ENCODE measurements at regions of chr3 and their contacts with region 1.

Region 1: GRCh38 chr3:179604321-179605078 is at the starts of genes MRPL47 and NDUFB5:
- DNase-seq: peak; percentile 96
- H3K4me3 Mint-ChIP-seq: peak within 1 kb of the TSS; percentile 99
- H3K27ac Mint-ChIP-seq: peak within 1 kb of the TSS; percentile 98
- H3K4me1 Mint-ChIP-seq: peaks cover 40% of the 10 kb centered on the region
- H3K27me3 Mint-ChIP-seq: no peaks in the 10 kb centered on the region
- total RNA-seq, gene MRPL47: 51.4 to 54.0 TPM
- total RNA-seq, gene NDUFB5: 133 to 147 TPM

Region 2: GRCh38 chr3:179551349-179552105 is 53.0 kb before region 1 on chr3:
- CTCF ChIA-PET with region 1: no interaction called
- POLR2A ChIA-PET with region 1: no interaction called
- intact Hi-C with region 1: no loop called
- DNase-seq: no peak
- H3K4me3 Mint-ChIP-seq: no peak overlapping the region
- H3K27ac Mint-ChIP-seq: no peak overlapping the region
- H3K4me1 Mint-ChIP-seq: no peaks in the 10 kb centered on the region
- H3K27me3 Mint-ChIP-seq: peaks cover 1% of the 10 kb centered on the region

Region 3: DNA sequence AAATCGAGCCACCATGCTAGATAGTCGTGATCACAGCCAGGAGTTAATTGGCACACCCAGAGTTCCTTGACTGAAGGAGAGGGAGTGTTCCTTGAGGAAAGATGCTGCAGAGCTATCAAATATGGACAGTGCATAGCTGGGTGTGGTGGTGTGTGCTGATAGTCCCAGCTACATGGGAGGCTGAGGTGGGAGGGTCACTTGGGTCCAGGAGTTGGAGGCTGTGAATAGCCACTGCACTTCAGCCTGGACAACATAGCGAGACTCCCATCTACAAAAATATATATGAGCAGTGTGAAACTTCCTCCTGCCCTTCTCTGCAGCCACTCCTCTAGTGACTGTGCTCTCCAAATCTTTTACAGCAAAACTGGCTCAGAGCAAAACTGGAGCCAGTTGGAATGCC is 38.4 kb after region 1 on chr3:
- CTCF ChIA-PET with region 1: no interaction called
- POLR2A ChIA-PET with region 1: interaction called, 7 read pairs
- intact Hi-C with region 1: loop called (anchors 1 kb)
- DNase-seq: no peak
- H3K4me3 Mint-ChIP-seq: no peak overlapping the region
- H3K27ac Mint-ChIP-seq: no peak overlapping the region
- H3K4me1 Mint-ChIP-seq: peaks cover 8% of the 10 kb centered on the region
- H3K27me3 Mint-ChIP-seq: no peaks in the 10 kb centered on the region

Measured in activated CD4-positive, alpha-beta memory T cell treated with anti-CD3 and anti-CD28 coated beads for 36 hours (primary cell).